AG04450 (cell line): ENCODE measurements at regions of chr21 and their contacts with region 1.

Region 1: GRCh38 chr21:45981151-45982089 is at the start of gene COL6A1:
- DNase-seq: peak; percentile 78
- H3K4me3 ChIP-seq: peak within 1 kb of the TSS; percentile 98
- H3K27ac ChIP-seq: peak within 1 kb of the TSS; percentile 87
- H3K27me3 ChIP-seq: no peaks in the 10 kb centered on the region
- CTCF ChIP-seq: no peak
- polyA plus RNA-seq, gene COL6A1: 493 and 591 TPM in 2 replicates

Region 2: GRCh38 chr21:45854690-45855247 is 126.7 kb before region 1 on chr21:
- CTCF ChIA-PET with region 1: no interaction called
- POLR2A ChIA-PET with region 1: no interaction called
- DNase-seq: no peak
- H3K4me3 ChIP-seq: no peak overlapping the region
- H3K27ac ChIP-seq: peak overlapping the region; percentile 11
- H3K27me3 ChIP-seq: no peaks in the 10 kb centered on the region
- CTCF ChIP-seq: no peak

Region 3: GRCh38 chr21:45995686-45996179 is 14.3 kb after region 1 on chr21:
- CTCF ChIA-PET with region 1: no interaction called
- POLR2A ChIA-PET with region 1: interaction called, 10 read pairs
- DNase-seq: no peak
- H3K4me3 ChIP-seq: no peak overlapping the region
- H3K27ac ChIP-seq: peak overlapping the region; percentile 39
- H3K27me3 ChIP-seq: no peaks in the 10 kb centered on the region
- CTCF ChIP-seq: no peak

Region 4: DNA sequence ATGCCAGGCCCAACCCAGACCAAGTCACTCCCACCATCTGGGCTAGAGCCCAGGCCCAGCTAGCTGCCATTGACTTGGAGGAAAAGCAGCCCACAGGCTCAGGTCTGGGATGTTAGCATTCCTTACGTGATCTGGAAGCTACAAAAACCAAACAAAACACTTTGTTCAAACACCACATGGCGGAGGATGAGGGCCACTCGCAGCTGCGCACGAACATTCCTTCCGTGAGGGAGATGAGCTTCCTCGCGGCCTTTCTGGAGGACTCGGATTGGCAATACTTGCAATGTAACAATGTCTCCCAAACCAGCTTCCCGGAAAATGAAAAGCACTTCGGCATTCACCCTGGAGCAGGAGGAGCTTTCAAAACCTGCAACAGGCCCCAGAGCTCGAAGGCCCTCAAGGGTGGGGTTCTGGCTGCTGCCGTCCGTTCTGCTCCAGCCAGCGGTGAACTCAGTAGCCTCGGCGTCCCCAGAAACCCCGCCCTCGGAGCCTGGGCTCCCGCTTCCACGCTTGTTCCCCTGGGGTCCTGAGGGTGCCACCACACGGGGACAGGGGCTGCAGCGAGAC is 40.6 kb after region 1 on chr21:
- CTCF ChIA-PET with region 1: no interaction called
- POLR2A ChIA-PET with region 1: no interaction called
- DNase-seq: peak; percentile 36
- H3K4me3 ChIP-seq: no peak overlapping the region
- H3K27ac ChIP-seq: peak overlapping the region; percentile 21
- H3K27me3 ChIP-seq: no peaks in the 10 kb centered on the region
- CTCF ChIP-seq: no peak

Region 5: GRCh38 chr21:46048926-46049889 is 67.8 kb after region 1 on chr21:
- CTCF ChIA-PET with region 1: no interaction called
- POLR2A ChIA-PET with region 1: interaction called, 12 read pairs
- DNase-seq: peak; percentile 100
- H3K4me3 ChIP-seq: peak overlapping the region; percentile 32; the same call in 1 of the 2 replicates
- H3K27ac ChIP-seq: peak overlapping the region; percentile 100
- H3K27me3 ChIP-seq: no peaks in the 10 kb centered on the region
- CTCF ChIP-seq: no peak

Region 6: GRCh38 chr21:46066591-46067331 is 85.3 kb after region 1 on chr21:
- CTCF ChIA-PET with region 1: no interaction called
- POLR2A ChIA-PET with region 1: interaction called, 12 read pairs
- DNase-seq: no peak
- H3K4me3 ChIP-seq: no peak overlapping the region
- H3K27ac ChIP-seq: peak overlapping the region; percentile 94
- H3K27me3 ChIP-seq: no peaks in the 10 kb centered on the region
- CTCF ChIP-seq: no peak

Region 7: DNA sequence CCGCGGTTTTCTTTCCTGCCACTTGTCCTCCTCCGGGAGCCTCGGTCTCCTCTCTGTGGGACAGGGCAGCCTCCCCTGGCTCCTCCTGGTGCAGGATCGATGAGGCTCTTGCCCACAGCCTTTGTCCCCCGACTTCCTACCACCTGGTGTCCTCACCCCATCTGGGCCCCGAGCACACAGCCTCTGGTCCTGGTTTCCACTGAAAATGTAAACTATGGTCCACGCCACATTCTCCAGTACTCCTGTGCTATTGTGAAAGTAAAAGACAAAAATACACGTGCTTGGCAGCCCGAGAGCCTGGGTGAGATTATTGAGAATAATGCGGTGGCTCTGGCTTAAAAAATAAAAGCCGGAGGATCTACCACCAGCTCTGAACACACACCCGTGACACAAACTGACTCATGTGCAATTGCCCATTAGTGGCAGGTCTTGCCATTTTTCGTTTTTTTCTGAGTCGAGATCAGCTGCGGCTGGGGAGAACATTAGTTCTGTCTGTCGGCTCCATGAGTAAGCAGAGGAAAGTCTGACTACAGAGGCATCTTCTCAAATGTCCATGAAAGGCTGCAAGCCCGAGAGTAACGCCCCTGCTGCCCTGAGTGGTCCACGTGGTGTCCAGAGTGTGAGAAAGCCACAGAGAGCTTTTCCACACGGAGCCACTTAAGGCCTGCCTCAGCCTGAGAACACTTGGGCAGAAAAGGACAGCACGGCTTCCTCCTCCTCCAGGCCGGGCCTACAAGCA is 110.8 kb after region 1 on chr21:
- CTCF ChIA-PET with region 1: no interaction called
- POLR2A ChIA-PET with region 1: interaction called, 17 read pairs
- DNase-seq: peak; percentile 96
- H3K4me3 ChIP-seq: peak overlapping the region; percentile 54
- H3K27ac ChIP-seq: peak overlapping the region; percentile 100
- H3K27me3 ChIP-seq: no peaks in the 10 kb centered on the region
- CTCF ChIP-seq: no peak

Region 8: DNA sequence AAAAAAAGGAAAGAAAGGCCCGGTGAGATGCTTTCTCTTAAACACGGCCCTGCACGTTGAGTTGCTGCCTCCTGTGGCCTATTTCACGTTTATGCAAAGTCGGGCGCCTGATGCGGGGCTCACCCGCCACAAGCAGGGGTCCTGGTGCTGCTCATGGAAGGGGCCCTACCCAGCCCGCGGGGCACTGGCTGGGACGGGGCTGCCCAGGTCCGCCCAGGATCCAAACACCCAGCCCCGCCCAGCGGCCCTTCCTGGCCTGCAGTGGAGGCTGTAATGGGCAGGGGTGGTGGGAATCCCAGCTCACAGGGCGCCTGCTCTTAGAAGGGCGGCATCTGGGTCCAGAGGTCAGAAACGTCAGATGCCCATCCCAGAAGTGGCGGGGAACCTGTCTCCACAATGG is 118.1 kb after region 1 on chr21:
- CTCF ChIA-PET with region 1: no interaction called
- POLR2A ChIA-PET with region 1: interaction called, 10 read pairs
- DNase-seq: no peak
- H3K4me3 ChIP-seq: peak overlapping the region; percentile 79
- H3K27ac ChIP-seq: peak overlapping the region; percentile 61
- H3K27me3 ChIP-seq: no peaks in the 10 kb centered on the region
- CTCF ChIP-seq: peak; percentile 38